Left cardiac atrium (tissue), 4 donors: ENCODE measurements at regions of chr4 and their contacts with region 1.

Region 1: GRCh38 chr4:85147439-85148076 is 181.1 kb upstream of the WDFY3 start:
- DNase-seq: peak; percentile 47
- ATAC-seq: peak; percentile 83 to 85

Region 2: GRCh38 chr4:84901173-84901572 is 246.4 kb before region 1 on chr4:
- intact Hi-C with region 1: no loop called
- DNase-seq: no peak
- ATAC-seq: no peak

Region 3: GRCh38 chr4:85125688-85126087 is 21.9 kb before region 1 on chr4:
- intact Hi-C with region 1: no loop called
- DNase-seq: no peak
- ATAC-seq: no peak

Region 4: DNA sequence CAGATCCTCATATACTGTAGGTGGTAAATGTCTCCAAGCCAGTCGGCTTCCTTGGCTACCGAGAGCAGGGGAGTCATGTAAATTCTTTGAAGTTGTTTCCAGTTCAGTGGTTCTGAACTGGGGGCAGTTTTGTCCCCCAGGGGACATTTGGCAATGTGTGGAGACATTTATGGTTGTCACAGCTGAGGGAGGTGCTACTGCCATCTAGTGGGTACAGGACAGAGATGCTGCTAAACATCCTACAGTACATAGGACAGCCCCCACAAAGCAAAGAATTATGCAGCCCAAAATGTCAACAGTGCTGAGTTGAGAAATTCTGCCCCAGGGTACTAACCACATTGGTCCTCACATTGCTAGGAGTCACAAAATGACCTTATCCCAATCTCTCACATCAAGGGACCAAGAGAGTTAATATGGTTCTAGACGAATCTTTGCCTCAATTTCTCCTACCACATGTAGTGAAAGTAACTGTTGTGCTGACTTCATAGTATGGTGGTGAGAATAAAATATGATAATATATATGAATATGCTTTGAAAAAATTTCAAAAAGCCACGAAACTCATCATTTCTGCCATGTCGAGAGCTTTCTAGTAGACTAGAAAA is 223.0 kb after region 1 on chr4:
- intact Hi-C with region 1: loop called (anchors 5 to 10 kb)
- DNase-seq: peak; percentile 22
- ATAC-seq: peak; percentile 74 to 75

Region 5: GRCh38 chr4:85557016-85557901 is 409.7 kb after region 1 on chr4:
- intact Hi-C with region 1: loop called in 1 of 2 experiments (anchors 10 kb)
- DNase-seq: no peak
- ATAC-seq: peak in 1 of 2 donors; percentile 26